ENCODE measurements at regions of chr11 and their contacts with region 1.

Region 1: GRCh38 chr11:117226388-117227385 is 5.2 kb downstream of the PCSK7 start:
- DNase-seq: peak in 7 of 9 donors; percentile 55 to 74 (median 69)
- ATAC-seq: peak; percentile 90
- H3K4me3 ChIP-seq: no peak overlapping the region
- H3K4me3 Mint-ChIP-seq: peak overlapping the region in 5 of 10 donors; percentile 18 to 43 (median 33)
- H3K27ac ChIP-seq: peak overlapping the region; percentile 37
- H3K27ac Mint-ChIP-seq: peak overlapping the region in 8 of 9 donors; percentile 52 to 94 (median 76)
- H3K4me1 ChIP-seq: peaks cover 32 to 33% of the 10 kb centered on the region in 2 donors
- H3K4me1 Mint-ChIP-seq: peaks cover 36 to 54% (median 42%) of the 10 kb centered on the region in 7 donors
- H3K27me3 ChIP-seq: no peaks in the 10 kb centered on the region
- H3K27me3 Mint-ChIP-seq: no peaks in the 10 kb centered on the region

Region 2: DNA sequence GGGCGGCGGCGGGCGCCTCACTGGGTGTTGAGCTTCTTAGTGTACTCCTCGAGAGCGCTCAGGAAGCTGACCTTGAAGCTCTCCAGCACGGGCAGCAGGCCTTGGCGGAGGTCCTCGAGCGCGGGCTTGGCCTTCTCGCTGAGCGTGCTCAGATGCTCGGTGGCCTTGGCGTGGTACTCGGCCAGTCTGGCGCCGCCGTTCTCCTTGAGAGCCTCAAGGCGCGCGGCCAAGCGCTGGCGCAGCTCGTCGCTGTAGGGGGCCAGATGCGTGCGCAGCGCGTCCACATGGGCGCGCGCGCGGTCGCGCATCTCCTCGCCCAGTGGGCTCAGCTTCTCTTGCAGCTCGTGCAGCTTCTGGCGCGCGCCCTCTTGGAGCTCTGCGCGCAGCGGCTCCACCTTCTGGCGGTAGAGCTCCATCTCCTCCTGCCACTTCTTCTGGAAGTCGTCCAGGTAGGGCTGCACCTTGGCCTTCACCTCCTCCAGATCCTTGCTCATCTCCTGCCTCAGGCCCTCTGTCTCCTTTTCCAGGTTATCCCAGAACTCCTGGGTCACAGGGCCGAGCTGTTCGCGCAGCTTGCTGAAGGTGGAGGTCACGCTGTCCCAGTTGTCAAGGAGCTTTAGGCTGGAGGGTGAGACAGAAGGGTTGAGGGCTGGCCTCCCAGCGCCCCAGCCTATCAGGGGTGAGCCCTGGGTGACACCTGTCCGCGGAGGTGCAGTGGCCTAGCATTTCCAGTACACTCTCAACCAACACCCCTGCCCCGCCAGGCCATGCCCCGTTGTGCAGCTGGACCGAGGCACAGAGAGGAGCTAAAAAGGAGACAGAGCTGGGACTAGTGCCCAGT is 390.7 kb before region 1 on chr11:
- CTCF ChIA-PET with region 1: interaction called, 6 read pairs
- POLR2A ChIA-PET with region 1: interaction called, 5 read pairs
- intact Hi-C with region 1: loop called (anchors 1 to 5 kb)
- DNase-seq: peak; percentile 66 to 85 (median 80)
- ATAC-seq: peak; percentile 97
- H3K4me3 ChIP-seq: peak overlapping the region; percentile 71
- H3K4me3 Mint-ChIP-seq: peak overlapping the region; percentile 68 to 84 (median 80)
- H3K27ac ChIP-seq: peak overlapping the region; percentile 41
- H3K27ac Mint-ChIP-seq: peak overlapping the region in 6 of 9 donors; percentile 31 to 75 (median 50)
- H3K4me1 ChIP-seq: peaks cover 4 to 9% of the 10 kb centered on the region in 2 donors
- H3K4me1 Mint-ChIP-seq: peaks cover 4 to 17% (median 14%) of the 10 kb centered on the region in 7 donors
- H3K27me3 ChIP-seq: no peaks in the 10 kb centered on the region
- H3K27me3 Mint-ChIP-seq: peaks cover 0 to 4% (median 0%) of the 10 kb centered on the region in 5 donors

Region 3: DNA sequence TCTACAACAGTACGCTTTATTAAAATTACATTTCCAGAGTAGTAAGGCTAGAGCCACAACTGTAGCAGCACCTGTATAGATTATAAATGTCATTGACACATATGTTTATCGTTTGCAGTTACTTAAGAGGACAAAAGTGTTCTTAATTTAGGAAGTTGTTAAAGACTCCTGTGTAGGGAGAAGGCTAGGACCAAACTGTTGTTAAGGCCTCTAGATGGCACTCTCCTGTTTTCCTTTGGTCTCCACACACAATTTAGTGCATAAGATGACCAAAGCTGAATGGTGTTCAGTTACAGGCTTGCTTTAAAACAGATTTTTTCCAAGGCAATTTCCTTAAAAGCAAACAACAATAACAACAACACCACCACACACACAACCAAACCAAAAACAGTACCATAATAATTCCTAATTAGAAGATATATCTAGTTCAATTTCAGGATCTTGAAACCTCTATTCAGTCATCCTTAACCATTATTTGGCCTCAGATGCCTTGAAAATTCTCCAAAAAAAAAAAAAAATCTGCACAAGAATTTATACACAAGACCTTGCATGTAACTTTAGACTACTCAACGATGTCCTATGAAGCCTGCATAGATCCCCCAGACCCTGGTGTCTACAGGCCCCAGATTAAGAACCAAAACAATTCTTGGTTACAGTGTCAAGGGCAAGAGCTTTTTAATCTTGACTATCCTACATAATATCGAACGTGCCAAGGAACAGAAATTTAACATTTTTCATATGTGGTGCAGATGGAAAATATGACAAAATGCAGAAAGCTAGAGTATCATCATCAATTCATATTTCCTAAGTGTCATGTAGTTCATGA is 346.7 kb before region 1 on chr11:
- CTCF ChIA-PET with region 1: no interaction called
- POLR2A ChIA-PET with region 1: no interaction called
- intact Hi-C with region 1: loop called (anchors 1 to 2 kb)
- DNase-seq: peak in 7 of 9 donors; percentile 31 to 54 (median 39)
- ATAC-seq: peak; percentile 84
- H3K4me3 ChIP-seq: no peak overlapping the region
- H3K4me3 Mint-ChIP-seq: no peak overlapping the region
- H3K27ac ChIP-seq: no peak overlapping the region
- H3K27ac Mint-ChIP-seq: peak overlapping the region in 4 of 9 donors; percentile 23 to 67 (median 46)
- H3K4me1 ChIP-seq: no peaks in the 10 kb centered on the region
- H3K4me1 Mint-ChIP-seq: peaks cover 0 to 18% (median 9%) of the 10 kb centered on the region in 7 donors
- H3K27me3 ChIP-seq: no peaks in the 10 kb centered on the region
- H3K27me3 Mint-ChIP-seq: no peaks in the 10 kb centered on the region

Region 4: DNA sequence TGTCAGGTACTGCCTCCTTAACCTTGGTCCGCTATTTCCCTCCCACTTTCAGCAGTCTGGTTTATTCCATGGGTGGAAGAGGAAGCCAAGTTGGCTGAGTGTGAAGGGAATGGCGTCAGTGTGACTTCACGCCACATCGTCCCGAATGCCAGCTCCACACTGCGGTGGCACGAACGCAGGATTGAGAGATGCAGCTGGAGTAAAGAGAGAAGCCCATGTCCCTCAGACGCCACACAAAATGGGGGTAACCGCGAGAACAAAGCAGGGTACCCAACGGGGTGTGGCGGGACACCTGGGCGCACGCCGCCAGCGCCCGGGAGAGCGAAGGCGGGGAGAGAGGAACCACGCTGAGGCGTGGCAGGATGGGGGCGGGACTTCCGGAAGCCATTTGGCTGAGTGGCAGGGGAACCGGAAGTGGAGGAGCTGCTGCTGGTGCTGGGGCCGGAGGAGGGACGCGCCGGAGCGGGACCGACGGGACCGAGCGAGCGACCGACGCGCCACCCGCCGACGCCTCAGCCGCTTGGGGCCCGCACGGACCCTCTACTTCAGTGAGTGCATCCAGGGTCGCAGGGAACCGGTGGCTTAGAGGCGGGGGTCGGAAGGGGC is 82.7 kb before region 1 on chr11 and contains the start of gene PAFAH1B2:
- CTCF ChIA-PET with region 1: interaction called, 6 read pairs
- POLR2A ChIA-PET with region 1: interaction called, 19 read pairs
- intact Hi-C with region 1: no loop called
- DNase-seq: peak; percentile 88 to 95 (median 94)
- ATAC-seq: peak; percentile 94
- H3K4me3 ChIP-seq: peak within 1 kb of the TSS; percentile 89
- H3K4me3 Mint-ChIP-seq: peak within 1 kb of the TSS; percentile 88 to 100 (median 97)
- H3K27ac ChIP-seq: peak within 1 kb of the TSS; percentile 85
- H3K27ac Mint-ChIP-seq: peak within 1 kb of the TSS; percentile 90 to 98 (median 97)
- H3K4me1 ChIP-seq: peaks cover 6 to 10% of the 10 kb centered on the region in 2 donors
- H3K4me1 Mint-ChIP-seq: peaks cover 28 to 57% (median 44%) of the 10 kb centered on the region in 7 donors
- H3K27me3 ChIP-seq: no peaks in the 10 kb centered on the region
- H3K27me3 Mint-ChIP-seq: peaks cover 11 to 24% (median 12%) of the 10 kb centered on the region in 5 donors
- total RNA-seq, gene PAFAH1B2: 48.9 to 62.0 (median 55.8) TPM

Measured in naive thymus-derived CD4-positive, alpha-beta T cell (primary cell).